ENCODE measurements at regions of chr22 and their contacts with region 1.

Region 1: GRCh38 chr22:37676736-37677492 is 1.5 kb downstream of the LGALS1 start:
- DNase-seq: peak; percentile 97
- H3K4me3 Mint-ChIP-seq: peak overlapping the region; percentile 87
- H3K27ac Mint-ChIP-seq: peak overlapping the region; percentile 93
- H3K4me1 Mint-ChIP-seq: peaks cover 52% of the 10 kb centered on the region
- H3K27me3 Mint-ChIP-seq: no peaks in the 10 kb centered on the region

Region 2: DNA sequence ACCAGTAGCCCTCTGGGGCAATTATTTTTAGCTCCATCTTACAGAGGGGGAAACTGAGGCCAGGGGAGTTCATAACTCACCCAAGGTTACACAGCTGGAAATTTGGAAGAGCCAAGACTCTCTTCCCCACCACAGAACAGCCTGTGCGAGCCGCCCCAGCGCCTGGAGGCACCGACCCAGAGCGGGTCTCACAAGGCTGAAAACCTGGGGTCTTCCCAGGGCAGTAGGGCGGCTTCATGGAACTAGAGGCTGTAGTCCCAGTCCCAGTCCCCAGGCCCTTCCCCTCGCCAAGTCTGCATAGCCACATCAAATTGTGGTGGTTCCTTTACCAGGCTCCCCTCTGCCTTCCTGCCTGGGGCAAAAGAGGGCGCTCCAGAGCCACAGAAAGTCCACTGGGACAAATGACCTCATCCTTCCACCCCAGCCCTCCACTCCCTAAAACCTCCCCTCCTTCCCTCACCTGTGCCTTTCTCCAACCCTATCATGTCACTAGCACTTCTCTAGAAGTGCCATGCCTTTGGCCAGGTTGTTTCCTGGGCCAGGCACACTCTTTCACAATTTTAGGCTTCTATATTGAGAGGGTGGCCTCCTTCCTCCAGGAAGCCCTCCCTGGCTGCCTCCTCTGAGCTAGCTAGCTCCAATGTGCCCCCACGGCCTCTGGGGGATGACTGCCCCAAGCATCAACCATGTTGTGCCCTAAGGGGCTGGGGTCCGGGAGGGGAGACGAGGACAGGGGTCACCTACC is 131.8 kb before region 1 on chr22:
- CTCF ChIA-PET with region 1: no interaction called
- POLR2A ChIA-PET with region 1: no interaction called
- intact Hi-C with region 1: loop called (anchors 5 kb)
- DNase-seq: peak; percentile 83
- H3K4me3 Mint-ChIP-seq: no peak overlapping the region
- H3K27ac Mint-ChIP-seq: no peak overlapping the region
- H3K4me1 Mint-ChIP-seq: peaks cover 28% of the 10 kb centered on the region
- H3K27me3 Mint-ChIP-seq: peaks cover 12% of the 10 kb centered on the region

Region 3: DNA sequence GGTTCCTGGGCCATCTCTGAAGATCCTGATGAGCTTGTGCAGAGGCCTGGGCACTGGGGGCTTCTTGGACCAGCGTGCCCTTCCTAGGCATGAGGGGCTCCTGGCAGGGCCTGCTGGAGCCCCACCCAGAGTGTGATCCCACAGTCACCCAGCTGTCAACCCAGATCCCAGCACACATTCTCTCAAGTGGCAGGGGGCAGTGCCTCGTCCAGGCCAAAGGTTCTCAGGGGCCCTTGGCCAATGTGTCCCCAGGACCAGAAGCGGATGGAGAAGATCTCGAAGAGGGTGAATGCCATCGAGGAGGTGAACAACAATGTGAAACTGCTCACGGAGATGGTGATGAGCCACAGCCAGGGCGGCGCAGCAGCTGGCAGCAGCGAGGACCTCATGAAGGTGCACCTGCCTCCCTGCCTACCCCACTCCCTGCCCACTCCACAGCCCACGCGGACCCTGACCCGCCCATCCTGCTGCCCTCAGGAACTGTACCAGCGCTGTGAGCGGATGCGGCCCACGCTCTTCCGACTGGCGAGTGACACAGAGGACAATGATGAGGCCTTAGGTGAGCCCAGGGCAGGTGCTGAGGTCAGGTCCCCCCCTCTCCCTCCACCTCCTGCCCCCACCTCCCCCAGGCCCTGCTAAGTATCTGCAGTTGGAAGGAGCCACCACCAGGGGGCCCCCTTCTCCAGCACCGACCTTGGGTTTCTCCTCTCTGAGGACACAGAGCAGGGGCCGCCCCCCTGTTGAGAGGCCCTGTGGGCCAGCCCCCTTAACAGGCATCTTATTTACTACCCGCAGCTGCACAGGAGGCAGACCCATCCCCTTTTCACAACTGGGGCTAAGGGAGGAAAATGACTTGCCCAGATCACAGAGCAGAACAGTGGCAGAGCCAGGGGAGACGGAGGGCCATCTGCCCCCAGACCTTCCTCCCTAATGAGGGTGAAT is 53.6 kb before region 1 on chr22:
- CTCF ChIA-PET with region 1: interaction called, 50 read pairs
- POLR2A ChIA-PET with region 1: interaction called, 4 read pairs
- intact Hi-C with region 1: loop called (anchors 1 kb)
- DNase-seq: peak; percentile 87
- H3K4me3 Mint-ChIP-seq: no peak overlapping the region
- H3K27ac Mint-ChIP-seq: peak overlapping the region; percentile 87
- H3K4me1 Mint-ChIP-seq: peaks cover 43% of the 10 kb centered on the region
- H3K27me3 Mint-ChIP-seq: no peaks in the 10 kb centered on the region

Region 4: DNA sequence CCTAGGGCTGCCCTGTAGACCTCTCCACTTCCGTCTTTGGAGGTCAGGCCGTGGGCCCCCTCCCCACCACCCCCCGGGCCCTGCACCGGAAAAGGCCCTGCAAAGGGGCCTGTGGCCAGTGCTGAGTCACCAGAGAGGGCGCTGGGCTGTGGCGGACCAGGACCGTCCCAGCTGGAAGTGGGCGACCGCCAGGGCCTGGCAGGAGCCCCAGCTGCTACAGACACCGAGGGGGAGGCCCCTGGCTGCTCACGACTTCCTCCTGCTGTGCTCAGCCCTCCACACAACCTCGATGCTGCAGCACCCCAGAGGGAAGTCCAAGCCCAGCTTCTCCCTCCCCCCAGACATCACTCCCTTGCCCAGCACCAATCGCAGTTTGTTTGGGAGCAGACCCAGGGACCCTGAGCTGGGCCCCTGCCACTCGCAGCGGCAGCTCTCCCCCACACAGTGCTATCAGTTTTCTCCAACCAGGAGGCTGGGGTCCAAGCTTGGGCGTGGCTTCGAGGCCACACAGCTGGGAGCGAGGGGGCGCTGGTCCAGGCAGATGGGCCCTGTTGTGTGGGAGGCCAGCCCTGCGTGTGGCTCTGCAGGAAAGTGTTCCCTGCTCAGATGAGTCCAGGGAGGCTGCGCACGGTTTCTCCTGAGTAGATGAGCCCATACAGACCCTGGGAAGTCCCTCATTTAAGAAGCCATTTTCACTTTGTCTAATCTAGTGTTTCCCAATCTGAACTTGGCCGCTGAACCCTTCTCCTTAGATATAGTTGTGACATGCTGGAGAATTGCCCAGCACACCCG is 43.1 kb before region 1 on chr22:
- CTCF ChIA-PET with region 1: interaction called, 574 read pairs
- POLR2A ChIA-PET with region 1: interaction called, 10 read pairs
- intact Hi-C with region 1: no loop called
- DNase-seq: peak; percentile 85
- H3K4me3 Mint-ChIP-seq: peak overlapping the region; percentile 66
- H3K27ac Mint-ChIP-seq: peak overlapping the region; percentile 95
- H3K4me1 Mint-ChIP-seq: peaks cover 65% of the 10 kb centered on the region
- H3K27me3 Mint-ChIP-seq: no peaks in the 10 kb centered on the region

Region 5: DNA sequence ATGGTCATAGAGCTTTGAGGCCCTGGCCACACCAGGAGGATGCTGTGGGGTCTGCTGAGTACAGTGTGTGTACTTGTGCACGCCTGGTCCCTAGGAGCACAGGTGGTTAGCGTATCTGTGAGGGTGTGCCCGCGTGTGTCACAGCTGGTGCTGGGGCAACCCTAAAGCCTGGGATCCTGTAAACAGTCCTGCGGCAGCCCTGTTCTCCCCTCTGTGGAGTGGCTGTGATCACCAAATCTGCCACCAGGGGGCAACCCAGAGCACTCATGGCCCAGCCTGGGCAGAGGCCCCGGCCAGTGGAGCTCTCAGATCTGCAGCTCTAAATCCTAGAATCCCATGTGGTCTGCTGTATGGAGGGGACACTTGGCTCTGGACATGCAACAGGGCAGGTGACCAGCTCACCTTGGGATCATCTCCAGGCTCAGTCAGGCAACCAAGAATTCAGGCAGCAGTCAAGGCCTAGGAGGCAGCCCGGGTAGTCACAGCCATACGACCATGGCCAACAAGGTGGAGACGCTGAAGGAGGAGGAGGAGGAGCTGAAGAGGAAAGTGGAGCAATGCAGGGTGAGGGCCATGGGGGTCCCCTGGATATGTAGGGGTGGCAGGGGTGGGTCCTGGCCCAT is 33.6 kb before region 1 on chr22:
- CTCF ChIA-PET with region 1: interaction called, 574 read pairs
- POLR2A ChIA-PET with region 1: interaction called, 10 read pairs
- intact Hi-C with region 1: loop called (anchors 1 kb)
- DNase-seq: peak; percentile 91
- H3K4me3 Mint-ChIP-seq: peak overlapping the region; percentile 29
- H3K27ac Mint-ChIP-seq: peak overlapping the region; percentile 76
- H3K4me1 Mint-ChIP-seq: peaks cover 32% of the 10 kb centered on the region
- H3K27me3 Mint-ChIP-seq: no peaks in the 10 kb centered on the region

Region 6: DNA sequence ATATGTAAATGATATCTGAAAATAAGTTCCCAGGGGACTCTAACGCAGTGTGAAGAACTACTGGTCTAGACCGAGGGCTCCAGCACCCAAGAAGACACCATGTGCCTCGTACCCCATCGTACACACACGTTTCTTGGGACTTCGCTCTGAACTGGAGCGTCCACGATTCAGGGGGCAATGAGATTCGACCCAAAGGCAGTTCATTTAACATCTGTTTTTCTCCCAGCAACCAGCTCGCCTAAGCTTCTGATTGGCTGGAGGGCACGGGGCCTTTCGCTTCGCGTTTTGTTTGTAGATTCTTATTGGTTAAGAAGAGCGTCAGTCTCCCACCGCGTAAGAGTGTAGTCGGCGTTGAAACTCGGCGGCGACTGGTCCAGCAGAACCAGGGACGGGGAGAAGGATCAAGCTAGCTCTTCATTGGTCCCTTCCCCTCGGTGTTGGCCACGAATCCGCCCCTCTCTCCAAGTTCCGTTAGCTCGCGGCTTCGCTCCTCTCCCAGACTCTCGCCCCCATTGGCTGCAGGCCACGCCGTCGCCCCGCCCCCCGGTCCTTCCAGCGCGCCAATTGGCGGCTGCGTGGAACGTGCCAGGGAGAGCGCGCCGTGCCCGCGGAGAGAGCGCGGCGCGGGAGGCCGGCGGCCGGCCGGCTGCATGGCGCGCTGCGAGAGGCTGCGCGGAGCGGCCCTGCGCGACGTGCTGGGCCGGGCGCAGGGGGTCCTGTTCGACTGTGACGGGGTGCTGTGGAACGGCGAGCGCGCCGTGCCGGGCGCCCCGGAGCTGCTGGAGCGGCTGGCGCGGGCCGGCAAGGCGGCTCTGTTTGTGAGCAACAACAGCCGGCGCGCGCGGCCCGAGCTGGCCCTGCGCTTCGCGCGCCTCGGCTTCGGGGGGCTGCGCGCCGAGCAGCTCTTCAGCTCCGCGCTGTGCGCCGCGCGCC is 18.5 kb before region 1 on chr22 and contains the start of gene PDXP:
- CTCF ChIA-PET with region 1: interaction called, 25 read pairs
- POLR2A ChIA-PET with region 1: interaction called, 14 read pairs
- intact Hi-C with region 1: loop called (anchors 1 kb)
- DNase-seq: peak; percentile 98
- H3K4me3 Mint-ChIP-seq: peak within 1 kb of the TSS; percentile 87
- H3K27ac Mint-ChIP-seq: peak within 1 kb of the TSS; percentile 72
- H3K4me1 Mint-ChIP-seq: peaks cover 31% of the 10 kb centered on the region
- H3K27me3 Mint-ChIP-seq: no peaks in the 10 kb centered on the region
- total RNA-seq, gene PDXP: 21.9 to 22.9 TPM

Region 7: DNA sequence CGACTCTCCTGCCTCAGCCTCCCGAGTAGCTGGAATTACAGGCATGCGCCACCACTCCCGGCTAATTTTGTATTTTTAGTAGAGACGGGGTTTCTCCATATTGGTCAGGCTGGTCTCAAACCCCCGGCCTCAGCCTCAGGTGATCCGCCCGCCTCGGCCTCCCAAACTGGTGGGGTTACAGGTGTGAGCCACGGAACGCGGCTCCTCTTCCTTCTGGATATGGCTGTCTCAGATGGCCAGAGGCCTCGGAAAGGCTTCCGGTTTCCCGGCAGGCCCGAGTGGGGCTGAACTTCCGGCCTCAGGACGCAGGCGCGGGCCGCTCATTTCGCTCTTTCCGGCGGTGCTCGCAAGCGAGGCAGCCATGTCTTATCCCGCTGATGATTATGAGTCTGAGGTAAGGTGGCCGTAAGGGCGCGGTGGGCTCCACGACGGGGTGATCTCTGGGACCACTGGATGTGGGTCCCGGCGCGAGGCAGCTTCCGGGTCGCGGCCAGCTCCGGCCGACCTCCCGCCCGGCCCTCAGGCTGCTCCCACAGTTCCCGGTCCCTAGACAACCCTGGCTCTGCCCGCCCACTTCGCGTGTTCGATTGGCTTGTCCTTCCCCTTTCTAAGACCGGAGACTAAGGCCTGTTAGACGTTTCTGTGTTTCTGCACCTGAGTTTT is 172.3 kb after region 1 on chr22 and contains the start of gene EIF3L:
- CTCF ChIA-PET with region 1: no interaction called
- POLR2A ChIA-PET with region 1: interaction called, 4 read pairs
- intact Hi-C with region 1: loop called (anchors 10 kb)
- DNase-seq: peak; percentile 94
- H3K4me3 Mint-ChIP-seq: peak within 1 kb of the TSS; percentile 91
- H3K27ac Mint-ChIP-seq: peak within 1 kb of the TSS; percentile 93
- H3K4me1 Mint-ChIP-seq: peaks cover 45% of the 10 kb centered on the region
- H3K27me3 Mint-ChIP-seq: no peaks in the 10 kb centered on the region
- total RNA-seq, gene EIF3L: 656 to 664 TPM

Measured in activated CD4-positive, alpha-beta memory T cell treated with anti-CD3 and anti-CD28 coated beads for 36 hours (primary cell).